Prostate gland (tissue), 2 donors: ENCODE measurements at regions of chr3 and their contacts with region 1.

Region 1: GRCh38 chr3:193592944-193593667 is at the start of gene OPA1:
- DNase-seq: peak; percentile 94
- H3K4me3 ChIP-seq: peak within 1 kb of the TSS; percentile 94 to 97
- H3K27ac ChIP-seq: peak within 1 kb of the TSS; percentile 77 to 80
- H3K4me1 ChIP-seq: peaks cover 5% of the 10 kb centered on the region
- H3K27me3 ChIP-seq: no peaks in the 10 kb centered on the region
- CTCF ChIP-seq: peak in 3 of 4 experiments; percentile 13 to 39 (median 39)
- POLR2A ChIP-seq: peak; percentile 49
- total RNA-seq, gene OPA1: 27.1 to 45.1 TPM

Region 2: GRCh38 chr3:192917404-192918274 is 675.5 kb before region 1 on chr3 and contains the start of gene MB21D2:
- intact Hi-C with region 1: loop called (anchors 5 kb)
- DNase-seq: peak; percentile 56
- H3K4me3 ChIP-seq: peak within 1 kb of the TSS; percentile 53 to 65
- H3K27ac ChIP-seq: peak within 1 kb of the TSS; percentile 77 to 79
- H3K4me1 ChIP-seq: no peaks in the 10 kb centered on the region
- H3K27me3 ChIP-seq: peaks cover 2% of the 10 kb centered on the region
- CTCF ChIP-seq: peak in 1 of 4 experiments; percentile 9
- POLR2A ChIP-seq: no peak
- total RNA-seq, gene MB21D2: 1.8 to 20.4 TPM

Region 3: DNA sequence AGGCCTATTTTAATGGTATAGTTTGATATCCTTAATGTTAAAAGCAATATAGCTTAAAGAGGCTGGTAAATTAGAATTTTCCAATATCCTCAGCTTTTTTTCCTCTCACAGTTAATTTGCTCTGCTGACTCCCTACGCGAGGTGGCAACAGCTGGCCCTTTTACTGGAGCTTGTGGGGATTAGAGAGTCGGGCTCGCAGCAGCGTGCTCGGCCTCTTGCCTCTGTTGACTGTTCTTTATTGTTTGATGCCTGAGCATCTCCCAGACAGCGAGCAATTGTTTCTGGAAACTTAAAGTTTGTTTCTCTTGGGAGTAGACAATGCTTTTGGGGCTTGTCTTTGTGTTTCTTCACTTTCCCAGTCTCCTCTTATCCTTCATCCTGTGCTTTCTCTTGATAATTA is 80.7 kb after region 1 on chr3:
- intact Hi-C with region 1: no loop called
- DNase-seq: peak; percentile 49
- H3K4me3 ChIP-seq: no peak overlapping the region
- H3K27ac ChIP-seq: no peak overlapping the region
- H3K4me1 ChIP-seq: no peaks in the 10 kb centered on the region
- H3K27me3 ChIP-seq: no peaks in the 10 kb centered on the region
- CTCF ChIP-seq: peak in 1 of 4 experiments; percentile 19
- POLR2A ChIP-seq: no peak